Transverse colon (tissue), 4 donors: ENCODE measurements at regions of chr11 and their contacts with region 1.

Region 1: GRCh38 chr11:118198370-118198769 is 21.9 kb upstream of the SCN2B start:
- DNase-seq: peak; percentile 86
- H3K4me3 ChIP-seq: peak overlapping the region in 1 of 4 donors; percentile 32
- H3K27ac ChIP-seq: peak overlapping the region in 2 of 4 donors; percentile 37 to 58
- H3K4me1 ChIP-seq: peaks cover 12 to 49% (median 23%) of the 10 kb centered on the region in 4 donors
- H3K27me3 ChIP-seq: no peaks in the 10 kb centered on the region
- CTCF ChIP-seq: peak; percentile 88 to 93 (median 89)
- EP300 ChIP-seq: no peak
- POLR2A ChIP-seq: no peak

Region 2: GRCh38 chr11:118060869-118061268 is 137.5 kb before region 1 on chr11:
- in situ Hi-C with region 1: no loop called
- intact Hi-C with region 1: no loop called
- DNase-seq: peak; percentile 29
- H3K4me3 ChIP-seq: no peak overlapping the region
- H3K27ac ChIP-seq: no peak overlapping the region
- H3K4me1 ChIP-seq: no peaks in the 10 kb centered on the region
- H3K27me3 ChIP-seq: no peaks in the 10 kb centered on the region
- CTCF ChIP-seq: no peak
- EP300 ChIP-seq: no peak
- POLR2A ChIP-seq: no peak

Region 3: GRCh38 chr11:118290923-118291322 is 92.6 kb after region 1 on chr11:
- in situ Hi-C with region 1: loop called in 3 of 4 experiments (anchors 5 to 25 kb)
- intact Hi-C with region 1: no loop called
- DNase-seq: peak; percentile 61
- H3K4me3 ChIP-seq: no peak overlapping the region
- H3K27ac ChIP-seq: no peak overlapping the region
- H3K4me1 ChIP-seq: peaks cover 0 to 17% (median 4%) of the 10 kb centered on the region in 4 donors
- H3K27me3 ChIP-seq: peaks cover 4% of the 10 kb centered on the region
- CTCF ChIP-seq: peak; percentile 34 to 73 (median 49)
- EP300 ChIP-seq: no peak
- POLR2A ChIP-seq: no peak

Region 4: DNA sequence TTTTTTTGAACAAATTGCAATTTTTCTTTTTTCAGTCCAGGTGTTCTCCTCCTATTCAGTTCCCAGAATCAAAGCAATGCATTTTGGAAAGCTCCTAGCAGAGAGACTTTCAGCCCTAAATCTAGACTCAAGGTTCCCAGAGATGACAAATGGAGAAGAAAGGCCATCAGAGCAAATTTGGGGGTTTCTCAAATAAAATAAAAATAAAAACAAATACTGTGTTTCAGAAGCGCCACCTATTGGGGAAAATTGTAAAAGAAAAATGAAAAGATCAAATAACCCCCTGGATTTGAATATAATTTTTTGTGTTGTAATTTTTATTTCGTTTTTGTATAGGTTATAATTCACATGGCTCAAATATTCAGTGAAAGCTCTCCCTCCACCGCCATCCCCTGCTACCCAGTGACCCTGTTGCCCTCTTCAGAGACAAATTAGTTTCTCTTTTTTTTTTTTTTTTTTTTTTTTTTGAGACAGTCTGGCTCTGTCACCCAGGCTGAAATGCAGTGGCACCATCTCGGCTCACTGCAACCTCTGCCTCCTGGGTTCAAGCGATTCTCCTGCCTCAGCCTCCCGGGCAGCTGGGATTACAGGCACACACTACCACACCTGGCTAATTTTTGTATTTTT is 154.8 kb after region 1 on chr11:
- in situ Hi-C with region 1: loop called in 3 of 4 experiments (anchors 5 to 25 kb)
- intact Hi-C with region 1: loop called (anchors 5 kb)
- DNase-seq: no peak
- H3K4me3 ChIP-seq: no peak overlapping the region
- H3K27ac ChIP-seq: no peak overlapping the region
- H3K4me1 ChIP-seq: no peaks in the 10 kb centered on the region
- H3K27me3 ChIP-seq: peaks cover 30% of the 10 kb centered on the region
- CTCF ChIP-seq: peak; percentile 50 to 66 (median 61)
- EP300 ChIP-seq: no peak
- POLR2A ChIP-seq: no peak

Region 5: DNA sequence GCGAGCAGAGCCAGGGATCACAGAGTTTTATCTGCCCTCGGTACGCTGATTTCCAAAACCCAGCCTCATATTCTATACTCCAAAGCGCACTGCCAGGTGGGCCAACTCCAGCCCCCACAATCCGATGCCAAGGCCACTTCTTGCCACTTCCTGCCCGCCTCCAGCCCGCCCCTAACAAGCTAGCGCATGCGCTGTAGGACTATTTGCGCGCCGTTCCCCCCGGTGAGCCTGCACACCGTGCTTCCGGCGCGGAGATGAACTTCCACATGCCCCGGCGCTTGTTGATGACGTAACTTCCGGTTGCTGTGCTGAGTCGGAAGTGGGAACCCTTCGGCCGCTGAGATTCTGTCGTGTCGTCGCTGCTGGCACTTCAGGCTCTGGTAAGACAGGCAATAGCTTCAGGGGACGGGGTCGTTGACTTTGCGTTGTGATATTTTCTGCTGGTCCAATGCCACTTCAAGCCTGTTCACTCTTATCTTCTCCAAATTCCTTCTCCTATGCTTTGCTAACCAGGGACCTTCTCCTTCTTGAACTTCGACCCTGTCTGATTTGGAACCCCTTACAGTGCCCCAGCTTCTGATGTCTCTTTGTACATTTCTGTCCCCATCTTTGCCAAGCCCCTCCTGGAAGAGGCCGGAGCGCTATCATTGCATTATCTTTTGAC is 161.1 kb after region 1 on chr11 and contains the start of gene UBE4A:
- in situ Hi-C with region 1: loop called in 3 of 4 experiments (anchors 5 to 25 kb)
- intact Hi-C with region 1: loop called (anchors 5 kb)
- DNase-seq: peak; percentile 97
- H3K4me3 ChIP-seq: peak within 1 kb of the TSS; percentile 59 to 93 (median 70)
- H3K27ac ChIP-seq: peak within 1 kb of the TSS; percentile 52 to 85 (median 75)
- H3K4me1 ChIP-seq: peaks cover 6 to 17% (median 12%) of the 10 kb centered on the region in 4 donors
- H3K27me3 ChIP-seq: no peaks in the 10 kb centered on the region
- CTCF ChIP-seq: no peak
- EP300 ChIP-seq: no peak
- POLR2A ChIP-seq: peak; percentile 73
- total RNA-seq, gene UBE4A: 42.3 to 54.3 (median 49.2) TPM

Region 6: DNA sequence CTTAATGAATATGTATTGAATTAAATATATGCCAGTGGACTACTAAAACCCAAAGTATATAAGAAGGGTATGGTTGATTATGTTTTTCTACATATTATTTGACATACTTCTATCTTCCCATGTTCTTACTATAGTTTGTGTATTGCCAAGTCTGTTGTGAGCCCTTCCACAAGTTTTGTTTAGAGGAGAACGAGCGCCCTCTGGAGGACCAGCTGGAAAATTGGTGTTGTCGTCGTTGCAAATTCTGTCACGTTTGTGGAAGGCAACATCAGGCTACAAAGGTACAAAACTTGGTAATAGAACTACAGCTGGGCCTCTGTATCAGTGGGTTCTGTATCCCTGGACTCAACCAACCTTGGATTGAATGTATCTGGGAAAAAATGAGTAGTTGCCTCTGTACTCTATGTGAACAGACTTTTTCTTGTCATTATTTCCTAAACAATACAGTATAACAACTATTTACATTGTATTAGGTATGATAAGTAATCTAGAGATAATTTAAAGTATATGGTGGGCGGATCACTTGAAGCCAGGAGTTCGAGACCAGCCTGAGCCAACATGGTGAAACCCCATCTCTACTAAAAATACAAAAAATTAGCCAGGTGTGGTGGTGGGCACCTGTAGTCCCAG is 290.2 kb after region 1 on chr11:
- in situ Hi-C with region 1: loop called in 2 of 4 experiments (anchors 10 to 25 kb)
- intact Hi-C with region 1: no loop called
- DNase-seq: peak; percentile 68
- H3K4me3 ChIP-seq: no peak overlapping the region
- H3K27ac ChIP-seq: no peak overlapping the region
- H3K4me1 ChIP-seq: no peaks in the 10 kb centered on the region
- H3K27me3 ChIP-seq: no peaks in the 10 kb centered on the region
- CTCF ChIP-seq: peak; percentile 76 to 80 (median 78)
- EP300 ChIP-seq: no peak
- POLR2A ChIP-seq: no peak

Region 7: DNA sequence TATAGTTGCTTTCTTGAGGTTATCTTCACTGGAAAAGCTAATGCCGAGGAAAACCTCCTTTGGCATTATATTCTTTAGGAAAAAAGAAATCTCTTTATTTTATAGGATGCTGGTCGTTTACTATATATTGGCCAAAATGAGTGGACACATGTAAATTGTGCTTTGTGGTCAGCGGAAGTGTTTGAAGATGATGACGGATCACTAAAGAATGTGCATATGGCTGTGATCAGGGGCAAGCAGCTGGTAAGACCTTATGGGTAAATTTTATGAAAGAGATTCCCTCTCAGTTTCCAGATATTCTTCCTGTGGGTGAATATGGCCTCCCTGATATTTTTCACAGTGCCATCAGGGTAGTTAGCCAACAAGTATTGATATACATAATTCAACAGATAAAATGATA is 299.5 kb after region 1 on chr11:
- in situ Hi-C with region 1: loop called in 2 of 4 experiments (anchors 10 to 25 kb)
- intact Hi-C with region 1: no loop called
- DNase-seq: no peak
- H3K4me3 ChIP-seq: no peak overlapping the region
- H3K27ac ChIP-seq: no peak overlapping the region
- H3K4me1 ChIP-seq: no peaks in the 10 kb centered on the region
- H3K27me3 ChIP-seq: no peaks in the 10 kb centered on the region
- CTCF ChIP-seq: no peak
- EP300 ChIP-seq: no peak
- POLR2A ChIP-seq: no peak